Ascending aorta (tissue), 2 donors: ENCODE measurements at regions of chr1 and their contacts with region 1.

Region 1: DNA sequence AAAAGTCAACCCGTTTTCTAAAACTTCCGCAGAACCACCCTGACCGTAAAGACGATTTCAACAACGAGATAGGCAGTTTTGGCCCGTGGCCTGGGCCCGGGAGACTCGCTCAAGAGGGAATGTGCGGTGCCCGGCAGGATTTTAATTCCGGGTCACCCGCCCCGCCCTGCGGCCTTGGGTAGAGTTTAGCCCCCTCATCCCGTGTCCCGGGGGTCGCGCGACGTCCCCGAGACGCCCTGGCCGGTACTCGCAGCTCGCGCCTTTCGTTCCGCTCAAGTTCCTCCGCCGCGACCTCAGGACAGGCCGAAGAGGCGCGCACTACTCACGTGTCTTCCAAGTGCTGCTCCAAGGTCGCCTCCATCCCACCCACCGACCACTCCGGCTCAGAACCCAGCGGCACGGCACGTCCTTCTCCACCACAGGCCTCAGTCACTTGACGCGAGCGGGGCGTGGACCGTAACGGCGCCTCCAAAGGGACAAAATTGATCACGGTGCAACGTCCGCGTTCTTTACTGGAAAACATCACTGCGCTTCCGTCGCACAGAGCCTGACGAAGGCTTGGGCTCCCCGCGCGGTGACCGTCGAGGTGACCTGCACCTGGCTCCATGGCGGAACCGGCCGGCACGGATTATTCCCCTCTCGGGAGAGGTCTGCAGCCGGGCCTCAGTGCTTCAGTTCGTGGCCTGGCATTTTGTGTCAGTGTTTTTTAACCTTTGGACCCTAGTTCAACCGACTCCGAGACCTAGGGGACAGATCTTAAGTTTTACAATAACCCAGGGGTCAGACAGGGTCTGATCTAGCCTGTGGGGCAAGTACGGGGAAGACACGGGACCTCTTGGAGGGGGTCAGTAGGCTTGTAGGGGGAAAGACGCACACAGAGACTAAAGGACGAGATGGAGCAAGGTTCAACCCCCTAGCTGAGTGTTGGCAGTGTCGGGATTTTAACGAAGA is at the start of gene LAMTOR5:
- DNase-seq: peak; percentile 75 to 97
- H3K4me3 ChIP-seq: peak within 1 kb of the TSS; percentile 81 to 93
- H3K27ac ChIP-seq: peak within 1 kb of the TSS; percentile 93 to 96
- H3K4me1 ChIP-seq: peaks cover 9 to 16% of the 10 kb centered on the region in 2 donors
- H3K27me3 ChIP-seq: no peaks in the 10 kb centered on the region
- CTCF ChIP-seq: peak in 2 of 3 experiments; percentile 5 to 15
- total RNA-seq, gene LAMTOR5: 21.7 TPM

Region 2: GRCh38 chr1:110390692-110391245 is 16.8 kb before region 1 on chr1 and contains the start of gene SLC16A4:
- intact Hi-C with region 1: loop called (anchors 1 kb)
- DNase-seq: peak in 1 of 2 donors; percentile 76
- H3K4me3 ChIP-seq: peak within 1 kb of the TSS; percentile 55 to 60
- H3K27ac ChIP-seq: peak within 1 kb of the TSS; percentile 73 to 84
- H3K4me1 ChIP-seq: peaks cover 5 to 22% of the 10 kb centered on the region in 2 donors
- H3K27me3 ChIP-seq: no peaks in the 10 kb centered on the region
- CTCF ChIP-seq: no peak
- total RNA-seq, gene SLC16A4: 5.6 TPM

Region 3: GRCh38 chr1:110466646-110467280 is 59.2 kb after region 1 on chr1:
- intact Hi-C with region 1: no loop called
- DNase-seq: no peak
- H3K4me3 ChIP-seq: no peak overlapping the region
- H3K27ac ChIP-seq: no peak overlapping the region
- H3K4me1 ChIP-seq: no peaks in the 10 kb centered on the region
- H3K27me3 ChIP-seq: no peaks in the 10 kb centered on the region
- CTCF ChIP-seq: no peak